ENCODE measurements at regions of chr19 and their contacts with region 1.

Region 1: DNA sequence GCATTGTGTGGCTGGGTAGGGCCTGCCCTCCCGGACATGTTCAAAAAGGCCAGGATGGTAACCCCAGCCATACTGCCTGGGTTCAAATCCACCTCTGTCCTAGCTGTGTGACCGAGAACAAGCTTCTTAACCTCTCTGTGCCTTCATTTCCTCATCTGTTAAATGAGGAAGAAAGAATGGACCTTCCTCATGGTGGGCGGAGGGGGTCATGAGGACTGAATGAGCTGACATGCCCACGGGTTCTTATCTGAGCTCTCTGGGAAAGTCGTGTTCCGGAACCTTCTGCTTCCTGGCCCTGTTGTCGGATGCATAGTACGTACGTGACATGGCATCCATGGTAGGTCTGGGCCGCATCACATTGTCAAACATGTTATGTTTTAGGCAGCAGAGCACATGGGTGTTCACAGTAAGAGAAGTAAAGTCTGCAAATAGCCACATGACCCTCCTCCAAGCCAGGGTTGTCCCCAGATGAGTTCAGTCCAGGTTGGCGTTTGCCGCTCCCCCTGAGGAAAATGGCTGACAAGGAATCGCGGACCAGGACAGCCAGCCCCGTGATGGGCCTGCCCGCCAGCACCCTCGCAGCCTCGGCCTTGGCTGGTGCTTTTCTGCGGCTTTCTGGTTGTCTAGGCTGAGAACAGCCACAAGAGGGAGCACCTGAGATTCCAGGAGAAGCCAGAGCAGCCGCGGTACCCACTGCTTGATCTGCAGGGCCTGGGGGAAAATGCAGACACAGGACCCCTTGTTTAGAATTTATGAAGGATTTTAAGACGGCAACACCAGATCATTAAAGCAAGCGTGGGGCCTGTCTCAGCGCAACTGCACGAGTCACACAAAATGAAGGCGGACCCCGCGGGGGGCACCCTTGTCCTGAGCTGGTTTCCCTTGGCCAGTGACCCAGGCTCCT is 2.4 kb upstream of the NTN5 start:
- DNase-seq: peak; percentile 86 to 95 (median 91)
- H3K4me3 ChIP-seq: no peak overlapping the region
- H3K27ac ChIP-seq: peak overlapping the region in 2 of 5 donors; percentile 59 to 62
- H3K4me1 ChIP-seq: peaks cover 0 to 9% of the 10 kb centered on the region in 2 donors
- H3K27me3 ChIP-seq: no peaks in the 10 kb centered on the region
- CTCF ChIP-seq: peak; percentile 72 to 89 (median 88)
- POLR2A ChIP-seq: no peak

Region 2: DNA sequence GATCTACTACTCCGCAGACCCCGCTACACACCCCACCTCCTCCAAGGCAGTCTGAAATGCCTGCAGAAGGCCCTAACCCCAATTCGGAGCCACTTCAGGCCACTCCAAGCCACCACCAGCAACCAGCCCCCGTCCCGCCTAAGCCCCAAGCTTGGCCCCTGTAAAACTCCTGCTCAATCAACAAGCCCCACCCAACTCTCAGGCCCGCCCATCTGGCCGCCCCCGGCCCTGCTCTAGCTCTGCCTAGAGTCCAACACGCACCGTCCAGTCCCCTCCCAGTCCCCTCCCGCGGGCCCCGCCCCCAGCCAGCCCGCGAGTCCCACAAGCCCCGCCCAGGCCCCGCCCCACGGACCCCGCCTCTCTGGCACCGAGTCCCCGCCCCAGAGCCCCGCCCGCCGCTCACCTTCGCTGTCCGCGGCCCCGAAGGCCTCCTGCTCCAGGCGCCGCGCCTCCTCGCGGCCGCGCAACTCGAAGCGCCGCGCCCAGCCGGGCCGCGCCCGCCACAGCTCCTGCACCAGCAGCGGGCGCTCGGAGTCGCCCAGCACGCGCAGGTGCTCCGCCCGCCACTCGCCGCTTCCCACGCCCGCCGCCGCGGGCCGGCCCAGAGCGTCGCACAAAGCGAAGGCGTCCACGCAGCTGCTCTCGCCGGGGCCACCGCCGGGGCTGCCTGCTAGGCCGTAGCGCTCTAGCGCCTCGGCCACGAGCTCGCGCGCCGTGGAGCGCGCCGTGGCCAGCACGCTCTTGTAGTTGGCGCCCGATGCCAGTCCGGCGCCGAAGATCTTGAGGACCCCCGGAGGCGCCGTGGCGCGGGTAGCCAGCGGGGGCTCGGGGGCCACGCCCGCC is 63.6 kb after region 1 on chr19:
- intact Hi-C with region 1: loop called in 1 of 2 experiments (anchors 10 kb)
- DNase-seq: peak; percentile 95 to 98 (median 96)
- H3K4me3 ChIP-seq: peak overlapping the region in 2 of 4 donors; percentile 13 to 50
- H3K27ac ChIP-seq: peak overlapping the region in 4 of 5 donors; percentile 45 to 93 (median 76)
- H3K4me1 ChIP-seq: peaks cover 24 to 25% of the 10 kb centered on the region in 2 donors
- H3K27me3 ChIP-seq: no peaks in the 10 kb centered on the region
- CTCF ChIP-seq: peak in 3 of 6 experiments; percentile 38 to 72 (median 60)
- POLR2A ChIP-seq: peak in 1 of 2 donors; percentile 71

Region 3: DNA sequence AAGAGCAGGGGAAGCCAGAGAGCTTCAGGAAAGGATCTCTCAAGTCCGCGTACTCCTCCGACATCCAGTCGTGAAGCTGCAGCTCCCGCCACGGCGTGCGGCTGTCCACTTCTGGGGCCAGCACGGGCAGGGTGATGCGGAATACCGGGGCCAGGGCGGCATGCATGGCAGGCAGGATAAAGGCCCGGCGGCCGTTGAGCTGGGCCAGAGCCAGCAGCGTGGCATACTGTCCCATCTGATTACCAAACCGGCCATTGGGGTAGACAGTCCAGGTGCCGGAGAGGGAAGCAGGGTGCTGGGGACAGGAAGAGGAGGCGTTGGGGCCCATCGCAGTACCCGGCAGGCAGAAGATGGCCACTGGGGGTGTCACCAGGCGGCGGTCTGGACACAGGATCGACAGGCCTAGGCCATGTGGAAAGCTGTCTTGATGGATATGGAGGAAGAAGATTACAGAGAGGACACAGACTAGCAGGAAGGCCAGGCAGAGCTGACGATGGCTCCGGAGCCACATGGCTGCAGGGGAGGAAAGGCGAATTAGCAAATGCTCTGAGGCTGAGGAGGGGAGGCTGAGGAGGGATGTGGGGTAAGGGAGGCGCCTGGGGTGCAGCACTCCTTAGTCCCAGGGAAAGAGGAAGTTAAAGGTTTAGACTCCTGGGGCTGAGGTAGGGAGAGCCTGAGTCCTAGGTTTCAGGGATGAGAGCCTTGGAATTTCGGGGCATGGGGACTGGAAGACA is 75.8 kb after region 1 on chr19:
- intact Hi-C with region 1: no loop called
- DNase-seq: no peak
- H3K4me3 ChIP-seq: no peak overlapping the region
- H3K27ac ChIP-seq: no peak overlapping the region
- H3K4me1 ChIP-seq: peaks cover 5 to 21% of the 10 kb centered on the region in 2 donors
- H3K27me3 ChIP-seq: no peaks in the 10 kb centered on the region
- CTCF ChIP-seq: no peak
- POLR2A ChIP-seq: no peak

Region 4: DNA sequence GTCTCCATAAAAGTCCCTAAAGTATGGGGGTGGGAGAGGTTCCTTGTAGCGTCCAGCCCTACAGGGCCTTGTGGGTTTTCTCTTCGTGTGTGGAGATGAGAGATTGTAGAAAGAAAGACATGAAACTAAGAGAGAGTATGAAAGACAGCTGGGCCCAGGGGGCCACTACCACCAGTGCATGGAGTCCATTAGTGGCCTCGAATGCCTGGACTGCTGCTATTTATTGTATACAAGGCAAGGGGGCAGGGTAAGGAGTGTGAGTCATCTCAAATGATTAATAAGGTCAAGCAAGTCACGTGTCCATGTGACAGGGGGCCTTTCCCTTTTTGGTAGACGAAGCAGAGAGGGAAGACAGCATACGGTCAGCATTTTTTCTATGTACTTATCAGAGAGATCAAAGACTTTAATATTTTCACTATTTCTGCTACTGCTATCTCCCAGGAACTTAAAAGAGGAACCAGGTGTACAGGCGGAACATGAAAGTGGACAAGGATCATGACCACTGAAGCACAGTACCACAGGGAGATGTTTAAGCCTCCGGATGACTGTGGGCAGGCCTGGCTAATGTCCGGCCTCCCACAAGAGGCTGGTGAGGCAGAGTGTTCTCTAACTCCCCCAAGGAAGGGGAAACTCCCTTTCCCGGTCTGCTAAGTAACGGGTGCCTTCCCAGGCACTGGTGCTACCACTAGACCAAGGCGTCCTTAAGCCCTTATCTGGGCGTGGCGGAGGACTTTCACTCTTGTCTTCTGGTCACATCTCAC is 105.6 kb after region 1 on chr19:
- intact Hi-C with region 1: loop called in 1 of 2 experiments (anchors 10 kb)
- DNase-seq: peak; percentile 71 to 86 (median 83)
- H3K4me3 ChIP-seq: no peak overlapping the region
- H3K27ac ChIP-seq: peak overlapping the region; percentile 43 to 87 (median 85)
- H3K4me1 ChIP-seq: peaks cover 14 to 17% of the 10 kb centered on the region in 2 donors
- H3K27me3 ChIP-seq: no peaks in the 10 kb centered on the region
- CTCF ChIP-seq: no peak
- POLR2A ChIP-seq: peak in 1 of 2 donors; percentile 64

Region 5: DNA sequence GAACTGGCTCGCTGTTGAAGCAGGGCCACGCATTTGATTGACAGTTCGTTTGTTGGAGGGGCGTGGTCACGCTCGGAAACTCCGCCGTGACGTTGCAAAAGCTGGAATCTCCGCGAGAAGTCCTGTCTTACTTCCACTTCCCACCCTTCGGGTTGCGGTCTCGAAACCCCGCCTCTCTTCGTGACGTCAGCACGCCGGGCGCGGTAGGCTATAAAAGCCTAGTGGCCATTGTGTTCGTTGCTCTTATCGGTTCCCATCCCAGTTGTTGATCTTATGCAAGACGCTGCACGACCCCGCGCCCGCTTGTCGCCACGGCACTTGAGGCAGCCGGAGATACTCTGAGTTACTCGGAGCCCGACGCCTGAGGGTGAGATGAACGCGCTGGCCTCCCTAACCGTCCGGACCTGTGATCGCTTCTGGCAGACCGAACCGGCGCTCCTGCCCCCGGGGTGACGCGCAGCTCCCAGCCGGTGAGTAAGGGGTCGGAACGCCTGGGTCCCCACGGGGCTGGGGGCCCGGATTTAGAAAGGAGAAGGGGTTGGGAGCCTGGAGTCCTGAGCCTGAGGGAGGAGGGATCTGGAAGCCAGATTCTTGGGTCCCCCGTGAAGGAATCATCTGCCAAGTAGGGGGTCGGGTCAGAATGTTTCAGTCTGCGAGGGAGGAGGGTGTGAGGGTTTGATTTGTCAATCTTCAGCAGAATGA is 197.2 kb after region 1 on chr19 and contains the start of gene PPP1R15A:
- intact Hi-C with region 1: no loop called
- DNase-seq: peak; percentile 97 to 100 (median 99)
- H3K4me3 ChIP-seq: peak within 1 kb of the TSS; percentile 64 to 81 (median 80)
- H3K27ac ChIP-seq: peak within 1 kb of the TSS; percentile 97 to 100 (median 99)
- H3K4me1 ChIP-seq: peaks cover 34 to 43% of the 10 kb centered on the region in 2 donors
- H3K27me3 ChIP-seq: no peaks in the 10 kb centered on the region
- CTCF ChIP-seq: peak in 5 of 6 experiments; percentile 24 to 53 (median 42)
- POLR2A ChIP-seq: peak; percentile 100
- total RNA-seq, gene PPP1R15A: 18.2 to 54.6 (median 39.4) TPM